ENCODE measurements at regions of chr10 and their contacts with region 1.

Region 1: DNA sequence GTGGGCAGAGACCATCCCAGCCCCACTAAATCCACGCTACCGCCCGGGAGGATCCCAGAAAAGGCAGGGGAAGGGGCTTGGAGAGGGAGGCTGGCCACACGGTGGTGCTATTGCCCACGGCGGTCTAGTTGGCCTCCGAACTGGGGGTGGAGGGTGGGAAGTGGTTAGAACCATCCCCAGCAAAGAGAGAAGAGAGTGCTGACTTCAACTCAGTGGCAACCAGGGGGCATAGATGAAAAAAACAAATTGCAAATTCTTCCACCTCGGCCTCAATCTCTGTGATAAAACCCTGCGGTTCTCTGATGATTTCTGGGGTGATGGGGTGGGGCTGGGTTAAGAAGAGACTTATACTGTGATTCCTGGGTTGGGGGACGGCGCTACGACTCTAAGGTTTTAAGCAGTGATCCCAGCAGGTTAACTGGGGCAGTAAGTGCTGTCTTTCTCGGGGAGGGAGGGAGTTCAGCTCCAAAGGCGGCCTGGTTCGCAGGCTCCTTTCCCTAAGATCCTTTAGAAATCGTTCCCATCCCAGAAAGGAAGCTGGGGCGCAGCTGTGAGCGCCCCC is 154.5 kb upstream of the LYZL2 start:
- DNase-seq: peak; percentile 67
- H3K4me3 Mint-ChIP-seq: peak overlapping the region; percentile 79
- H3K27ac Mint-ChIP-seq: peak overlapping the region; percentile 75
- H3K4me1 Mint-ChIP-seq: peaks cover 29% of the 10 kb centered on the region
- H3K27me3 Mint-ChIP-seq: peaks cover 7% of the 10 kb centered on the region

Region 2: GRCh38 chr10:30687698-30688219 is 96.3 kb before region 1 on chr10:
- intact Hi-C with region 1: loop called (anchors 5 kb)
- DNase-seq: peak; percentile 63
- H3K4me3 Mint-ChIP-seq: no peak overlapping the region
- H3K27ac Mint-ChIP-seq: no peak overlapping the region
- H3K4me1 Mint-ChIP-seq: peaks cover 44% of the 10 kb centered on the region
- H3K27me3 Mint-ChIP-seq: peaks cover 5% of the 10 kb centered on the region

Region 3: GRCh38 chr10:31083765-31084184 is 299.8 kb after region 1 on chr10:
- intact Hi-C with region 1: loop called (anchors 1 kb)
- DNase-seq: peak; percentile 58
- H3K4me3 Mint-ChIP-seq: no peak overlapping the region
- H3K27ac Mint-ChIP-seq: peak overlapping the region; percentile 11
- H3K4me1 Mint-ChIP-seq: peaks cover 24% of the 10 kb centered on the region
- H3K27me3 Mint-ChIP-seq: peaks cover 4% of the 10 kb centered on the region

Region 4: GRCh38 chr10:31490858-31491504 is 707.0 kb after region 1 on chr10:
- intact Hi-C with region 1: loop called (anchors 1 kb)
- DNase-seq: no peak
- H3K4me3 Mint-ChIP-seq: no peak overlapping the region
- H3K27ac Mint-ChIP-seq: no peak overlapping the region
- H3K4me1 Mint-ChIP-seq: peaks cover 19% of the 10 kb centered on the region
- H3K27me3 Mint-ChIP-seq: no peaks in the 10 kb centered on the region

Region 5: DNA sequence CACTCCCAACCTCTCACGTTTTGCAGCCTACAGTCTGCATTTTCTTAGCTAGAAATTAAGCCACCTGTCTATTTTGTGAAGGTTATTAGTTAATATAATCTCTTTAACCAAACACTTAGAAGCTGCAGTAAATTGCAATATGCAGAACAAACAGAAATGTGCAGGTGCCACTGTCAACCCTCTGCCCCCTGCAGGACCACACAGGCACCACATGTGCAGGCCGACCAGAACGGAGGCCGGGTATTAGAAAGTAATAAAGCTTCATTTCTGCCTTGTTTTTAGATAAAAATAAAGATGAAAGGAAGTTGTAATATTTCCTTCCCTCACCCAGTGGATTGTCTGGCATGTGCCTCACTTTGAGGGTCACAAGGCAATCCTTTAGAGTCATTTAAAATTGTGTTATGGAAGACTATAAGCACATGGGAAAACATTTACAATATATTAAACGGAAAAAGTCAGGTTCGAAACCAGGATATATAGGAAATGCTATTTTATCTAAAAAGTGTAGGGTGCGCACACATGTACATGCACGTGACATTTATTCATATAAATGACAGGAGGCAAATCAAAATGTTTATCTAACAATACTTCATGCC is 986.4 kb after region 1 on chr10:
- intact Hi-C with region 1: loop called (anchors 2 kb)
- DNase-seq: peak; percentile 22
- H3K4me3 Mint-ChIP-seq: no peak overlapping the region
- H3K27ac Mint-ChIP-seq: no peak overlapping the region
- H3K4me1 Mint-ChIP-seq: no peaks in the 10 kb centered on the region
- H3K27me3 Mint-ChIP-seq: no peaks in the 10 kb centered on the region

Measured in activated T-helper 1 cell treated with anti-CD3 and anti-CD28 coated beads, Interleukin-12 subunit alpha, Interleukin-12 subunit beta, Interleukin-2, Interleukin-4 antibody, amounts not matched to agents 30 ng/mL and 10 ng/mL and 1 ng/mL, durations not matched to agents 14 hours and 24 hours and 36 hours (primary cell).